H1 (cell line): ENCODE measurements at regions of chr18 and their contacts with region 1.

Region 1: DNA sequence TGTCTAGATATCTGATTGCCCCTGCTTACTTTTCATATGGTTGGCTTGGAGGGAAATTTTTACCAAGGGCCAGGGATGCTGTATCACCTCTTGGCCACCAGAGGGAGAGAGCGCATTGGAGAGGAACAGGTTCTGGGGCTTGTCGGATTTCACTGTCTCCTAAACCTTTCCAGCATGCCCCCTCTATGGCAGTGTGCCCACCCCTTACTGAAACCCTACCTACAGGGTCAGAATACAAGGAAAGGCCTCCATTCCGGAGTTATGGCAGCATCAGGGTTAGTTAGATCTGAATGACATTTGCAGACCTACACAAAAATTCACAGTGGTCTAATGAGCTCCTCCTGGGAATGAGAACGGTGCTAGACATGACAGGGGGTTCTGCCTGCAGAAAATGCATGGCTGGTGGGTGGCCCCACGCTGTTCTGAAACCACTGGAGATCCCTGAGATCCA is 5.8 kb downstream of the SLC14A2 start:
- DNase-seq: peak in 1 of 2 experiments; percentile 56
- H3K4me3 ChIP-seq: no peak overlapping the region
- H3K27ac ChIP-seq: no peak overlapping the region
- H3K4me1 ChIP-seq: peaks cover 0 to 2% (median under 1%) of the 10 kb centered on the region in 4 experiments; a peak in 2 of 7 replicates
- H3K27me3 ChIP-seq: no peaks in the 10 kb centered on the region
- CTCF ChIP-seq: peak; percentile 81 to 92 (median 82)
- EP300 ChIP-seq: no peak
- POLR2A ChIP-seq: no peak
- RAD21 ChIP-seq: peak; percentile 77 to 83

Region 2: DNA sequence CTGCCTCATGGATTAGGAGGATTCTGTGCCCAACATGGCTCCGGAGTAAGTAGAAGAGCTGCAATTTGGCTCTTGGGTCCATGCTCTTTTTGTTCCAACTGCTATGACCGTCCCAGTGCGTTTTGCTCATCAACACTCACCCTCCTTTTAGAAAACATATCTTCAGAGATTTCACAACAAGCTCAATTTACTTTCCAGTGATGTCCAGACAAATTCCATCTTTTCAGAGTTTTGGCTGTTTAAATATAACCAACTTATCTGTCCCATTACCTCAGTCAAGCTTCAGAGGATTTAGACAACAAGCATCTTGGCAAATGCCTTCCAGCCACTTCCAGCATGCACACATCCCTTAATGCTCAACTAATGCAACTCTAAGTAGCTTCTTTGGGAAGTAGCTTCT is 12.7 kb before region 1 on chr18:
- CTCF ChIA-PET with region 1: interaction called, 45 read pairs
- POLR2A ChIA-PET with region 1: interaction called, 3 read pairs
- DNase-seq: no peak
- H3K4me3 ChIP-seq: no peak overlapping the region
- H3K27ac ChIP-seq: no peak overlapping the region
- H3K4me1 ChIP-seq: peaks cover 0 to 10% (median 5%) of the 10 kb centered on the region in 4 experiments; a peak in 4 of 7 replicates
- H3K27me3 ChIP-seq: no peaks in the 10 kb centered on the region
- CTCF ChIP-seq: no peak
- EP300 ChIP-seq: no peak
- POLR2A ChIP-seq: no peak
- RAD21 ChIP-seq: no peak

Region 3: DNA sequence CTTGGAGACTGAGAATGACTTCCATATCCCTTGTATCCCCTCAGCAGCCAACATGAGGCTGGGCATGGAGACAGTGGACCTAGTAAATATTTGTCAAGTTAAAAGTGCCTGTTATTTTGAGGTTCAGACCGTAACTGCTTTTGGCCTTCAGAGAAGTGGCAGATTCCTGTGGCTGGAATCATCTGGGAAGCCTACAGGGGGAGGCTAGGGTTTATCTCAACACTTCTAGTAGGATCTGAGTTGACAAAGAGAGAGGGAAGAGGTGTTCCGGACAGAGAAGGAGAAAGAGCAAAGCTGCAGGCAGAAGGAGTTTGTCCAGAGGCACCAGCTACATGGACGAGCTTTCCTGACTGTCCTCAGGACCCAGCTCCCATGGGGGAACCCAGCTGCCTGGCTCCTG is 21.2 kb after region 1 on chr18:
- CTCF ChIA-PET with region 1: interaction called, 11 read pairs
- POLR2A ChIA-PET with region 1: no interaction called
- DNase-seq: no peak
- H3K4me3 ChIP-seq: no peak overlapping the region
- H3K27ac ChIP-seq: no peak overlapping the region
- H3K4me1 ChIP-seq: no peaks in the 10 kb centered on the region
- H3K27me3 ChIP-seq: no peaks in the 10 kb centered on the region
- CTCF ChIP-seq: no peak
- EP300 ChIP-seq: no peak
- POLR2A ChIP-seq: no peak
- RAD21 ChIP-seq: no peak

Region 4: DNA sequence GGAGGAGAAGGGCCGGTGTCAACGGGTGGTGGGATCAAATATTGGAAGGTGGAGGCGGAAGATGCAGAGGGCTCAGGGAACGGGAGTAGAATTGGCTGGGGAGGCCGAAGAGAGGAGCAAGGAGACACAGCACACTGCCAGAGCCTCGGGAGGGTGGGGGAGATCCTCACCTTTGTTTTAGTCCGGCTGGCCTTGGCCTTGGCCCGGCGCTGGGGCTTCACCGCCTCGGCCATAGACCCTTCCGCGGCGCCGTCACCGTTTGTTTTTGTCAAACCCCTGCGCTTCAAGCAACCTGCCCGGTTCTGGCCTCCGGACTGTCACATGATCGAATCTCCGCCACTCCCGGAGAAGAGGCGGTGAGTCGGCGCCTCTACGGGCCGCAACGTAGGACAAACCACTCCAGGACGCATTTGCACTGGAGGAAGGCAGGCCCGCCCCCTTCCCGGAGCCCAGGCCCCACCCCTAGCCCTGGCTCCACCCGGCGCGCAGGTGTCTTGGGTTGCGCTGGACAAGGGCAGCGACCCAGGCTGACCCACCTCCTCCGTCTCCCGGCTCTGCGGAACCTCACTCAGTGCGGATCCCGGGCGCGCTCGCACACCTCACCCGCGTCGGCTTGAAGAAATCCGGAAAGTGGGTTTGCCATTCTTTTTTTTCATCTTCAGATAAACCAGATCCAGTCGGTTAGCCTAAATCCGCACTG is 346.1 kb after region 1 on chr18 and contains the start of gene EPG5:
- CTCF ChIA-PET with region 1: no interaction called
- POLR2A ChIA-PET with region 1: no interaction called
- DNase-seq: peak; percentile 90 to 97
- H3K4me3 ChIP-seq: peak within 1 kb of the TSS; percentile 80 to 98 (median 91)
- H3K27ac ChIP-seq: peak within 1 kb of the TSS; percentile 75; the same call in 1 of the 2 replicates
- H3K4me1 ChIP-seq: no peaks in the 10 kb centered on the region
- H3K27me3 ChIP-seq: peaks cover 0 to 3% (median 0%) of the 10 kb centered on the region in 4 experiments; a peak in 3 of 7 replicates
- CTCF ChIP-seq: peak in 1 of 3 experiments; percentile 1; a peak in 1 of 4 replicates
- EP300 ChIP-seq: no peak
- POLR2A ChIP-seq: peak; percentile 81 to 96
- RAD21 ChIP-seq: no peak
- total RNA-seq, gene EPG5: 18.3 and 18.6 TPM in 2 replicates